ENCODE measurements at regions of chr20 and their contacts with region 1.

Region 1: GRCh38 chr20:50516180-50516934 is 6.2 kb downstream of the PTPN1 start:
- DNase-seq: no peak
- H3K4me3 Mint-ChIP-seq: peak overlapping the region; percentile 65
- H3K27ac Mint-ChIP-seq: peak overlapping the region; percentile 93
- H3K4me1 Mint-ChIP-seq: peaks cover 88% of the 10 kb centered on the region
- H3K27me3 Mint-ChIP-seq: no peaks in the 10 kb centered on the region

Region 2: DNA sequence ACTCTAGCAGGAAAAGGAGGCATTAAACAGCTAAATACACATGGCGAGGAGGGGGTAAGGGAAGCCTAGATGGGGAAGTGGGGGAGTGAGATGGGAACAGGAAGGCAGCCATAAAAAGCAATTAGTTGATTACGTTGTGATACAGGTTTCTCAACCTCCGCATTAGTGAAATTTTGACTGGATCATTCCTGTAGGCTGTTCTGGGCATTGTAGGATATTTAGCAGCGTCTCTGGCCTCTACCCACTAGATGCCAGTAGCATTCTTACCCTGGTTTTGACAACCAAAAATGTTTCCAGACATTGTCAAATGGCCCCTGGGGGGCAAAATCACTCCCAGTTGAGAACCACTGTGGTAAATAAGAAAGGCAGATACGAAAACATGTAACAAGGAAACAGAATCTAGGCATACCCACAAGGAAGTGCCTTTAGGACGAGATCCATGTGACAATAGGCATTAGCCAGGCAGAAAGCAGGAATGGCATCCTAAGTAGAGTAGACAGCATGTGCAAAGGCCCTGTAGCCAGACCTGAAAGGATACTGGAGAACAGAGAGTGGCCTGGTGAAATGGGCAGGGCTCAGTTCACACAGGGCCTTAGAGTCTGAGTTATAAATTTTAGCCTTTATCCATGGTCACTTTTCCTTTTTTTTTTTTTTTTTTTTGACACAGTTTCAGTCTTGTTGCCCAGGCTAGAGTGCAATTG is 31.9 kb before region 1 on chr20:
- CTCF ChIA-PET with region 1: interaction called, 19 read pairs
- POLR2A ChIA-PET with region 1: interaction called, 25 read pairs
- DNase-seq: no peak
- H3K4me3 Mint-ChIP-seq: peak overlapping the region; percentile 80
- H3K27ac Mint-ChIP-seq: peak overlapping the region; percentile 88
- H3K4me1 Mint-ChIP-seq: peaks cover 51% of the 10 kb centered on the region
- H3K27me3 Mint-ChIP-seq: no peaks in the 10 kb centered on the region

Region 3: GRCh38 chr20:50528804-50529351 is 12.5 kb after region 1 on chr20:
- CTCF ChIA-PET with region 1: no interaction called
- POLR2A ChIA-PET with region 1: interaction called, 107 read pairs
- DNase-seq: no peak
- H3K4me3 Mint-ChIP-seq: no peak overlapping the region
- H3K27ac Mint-ChIP-seq: no peak overlapping the region
- H3K4me1 Mint-ChIP-seq: peaks cover 26% of the 10 kb centered on the region
- H3K27me3 Mint-ChIP-seq: no peaks in the 10 kb centered on the region

Region 4: DNA sequence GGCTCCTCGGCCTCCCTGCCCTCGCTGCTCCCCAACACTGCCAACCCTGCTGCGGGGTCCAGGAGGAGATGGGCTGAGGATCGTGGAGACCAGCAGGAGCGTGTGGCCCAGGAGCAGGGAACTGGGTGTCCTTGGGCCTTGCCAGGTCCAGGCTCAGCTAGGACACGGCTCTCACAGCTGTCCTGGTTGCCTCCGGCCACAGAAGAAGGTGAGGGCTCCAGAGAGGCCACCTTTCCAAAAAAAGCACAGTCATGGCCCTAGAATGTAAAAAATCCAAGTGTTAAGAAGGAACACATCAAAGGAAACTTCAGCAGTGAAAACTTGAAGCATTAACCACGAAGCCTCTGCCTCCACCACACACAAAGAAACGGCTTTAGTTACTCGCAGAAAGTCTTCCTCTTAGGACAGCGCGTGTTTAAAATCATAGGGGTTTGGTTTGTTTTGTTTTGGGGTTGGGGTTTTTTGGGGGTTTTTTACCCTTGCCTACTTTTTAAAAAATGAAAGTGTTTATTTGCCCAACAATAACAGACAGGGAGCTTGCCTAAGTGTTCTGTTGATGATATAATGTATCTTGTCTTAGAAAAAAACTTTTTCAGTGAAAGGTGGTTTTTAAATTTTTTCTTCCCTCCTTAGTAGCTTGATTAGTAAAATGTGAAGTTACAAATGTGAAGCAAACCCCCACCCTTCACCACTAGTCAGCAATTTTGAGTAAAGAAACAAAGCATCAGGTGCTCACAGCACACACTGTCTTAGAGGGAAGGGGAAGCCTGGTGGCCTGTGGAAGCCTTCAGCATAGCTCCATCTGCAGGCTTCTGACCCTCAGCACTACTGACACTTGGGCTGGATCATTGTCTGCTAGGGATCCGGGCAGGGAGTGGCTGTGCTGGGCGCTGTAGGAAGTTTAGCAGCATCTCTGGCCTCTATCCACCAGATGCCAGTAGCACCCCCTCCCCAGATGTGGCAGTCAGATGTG is 53.8 kb after region 1 on chr20:
- CTCF ChIA-PET with region 1: interaction called, 22 read pairs
- POLR2A ChIA-PET with region 1: interaction called, 22 read pairs
- DNase-seq: peak; percentile 53
- H3K4me3 Mint-ChIP-seq: no peak overlapping the region
- H3K27ac Mint-ChIP-seq: peak overlapping the region; percentile 73
- H3K4me1 Mint-ChIP-seq: peaks cover 59% of the 10 kb centered on the region
- H3K27me3 Mint-ChIP-seq: no peaks in the 10 kb centered on the region

Region 5: DNA sequence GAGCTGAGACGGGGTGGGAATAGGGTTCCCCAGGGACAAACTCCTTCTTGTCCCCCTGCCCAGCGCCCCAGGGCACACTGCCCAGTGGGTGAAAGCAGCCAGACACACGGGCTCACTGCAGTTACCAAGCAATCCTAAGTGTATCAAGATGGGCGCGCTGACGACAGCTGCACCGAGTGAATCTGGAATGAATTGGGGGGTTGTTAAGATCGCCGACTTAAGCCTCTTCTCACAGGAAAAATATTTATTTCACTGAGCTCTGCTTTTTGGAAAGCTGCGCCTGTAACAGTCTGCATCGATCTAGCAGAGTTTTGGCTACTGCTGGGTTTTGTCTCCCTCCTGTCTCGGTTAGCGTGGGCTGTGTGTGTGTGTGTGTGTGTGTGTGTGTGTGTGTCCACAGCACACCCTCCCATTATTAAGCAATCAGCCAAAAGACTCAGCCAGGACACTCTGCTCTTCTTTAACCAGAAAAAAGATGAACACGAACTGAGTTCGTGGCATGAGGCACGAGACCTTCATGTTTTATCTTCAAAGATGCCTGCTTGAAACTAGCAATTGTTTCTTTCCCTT is 139.0 kb after region 1 on chr20:
- CTCF ChIA-PET with region 1: no interaction called
- POLR2A ChIA-PET with region 1: no interaction called
- DNase-seq: no peak
- H3K4me3 Mint-ChIP-seq: no peak overlapping the region
- H3K27ac Mint-ChIP-seq: no peak overlapping the region
- H3K4me1 Mint-ChIP-seq: no peaks in the 10 kb centered on the region
- H3K27me3 Mint-ChIP-seq: peaks cover 2% of the 10 kb centered on the region